Dorsolateral prefrontal cortex (tissue), 120 donors: ENCODE measurements at regions of chr3 and their contacts with region 1.

Region 1: DNA sequence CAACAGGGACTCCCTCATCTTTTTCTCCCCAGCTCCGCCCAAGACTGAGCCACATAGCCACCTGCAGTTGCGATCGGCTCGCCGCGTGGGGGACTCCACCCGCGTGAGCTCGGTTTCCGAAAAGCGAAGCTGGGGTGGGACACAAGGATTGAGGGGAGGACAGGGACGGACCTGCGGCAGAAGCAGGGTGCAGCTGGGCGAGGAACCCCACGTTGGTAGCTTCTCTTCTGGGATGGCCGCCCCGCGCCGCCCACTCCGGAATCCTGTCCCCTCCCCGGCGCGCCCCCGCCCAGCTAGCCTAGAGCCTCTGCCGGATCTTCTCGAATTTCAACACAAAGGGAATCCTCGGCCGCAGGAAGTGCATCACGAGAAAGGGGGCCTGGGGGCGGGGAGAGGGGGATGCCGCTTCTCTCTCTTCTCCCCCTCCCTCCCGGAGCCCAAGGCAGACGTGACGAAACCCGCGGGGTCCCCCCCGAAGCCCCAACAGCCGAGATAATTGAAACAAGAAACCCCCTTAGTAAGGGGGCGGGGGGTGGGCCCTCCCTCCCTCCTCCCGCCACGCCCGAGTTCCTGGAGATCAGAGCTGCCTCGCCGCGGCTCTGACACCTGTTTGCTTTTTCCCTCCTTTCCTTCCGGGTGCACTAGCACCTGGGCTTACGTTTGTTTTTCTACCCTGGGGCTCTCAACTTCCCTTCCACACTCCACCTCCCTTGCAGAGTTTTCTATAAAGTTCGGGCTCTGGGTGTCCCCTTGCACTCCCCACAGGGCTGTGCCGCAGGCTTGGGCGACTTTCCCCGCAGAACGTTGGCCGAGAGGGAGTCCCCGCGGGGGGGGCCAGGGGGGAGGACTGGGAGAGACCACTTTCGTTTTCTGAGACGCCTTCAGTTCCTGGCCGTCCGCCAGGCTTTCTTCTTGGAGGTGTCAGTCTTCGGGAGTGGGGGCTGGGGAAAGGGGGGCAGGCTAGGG is 1.3 kb upstream of the KCNH8 start:
- DNase-seq: peak; percentile 23 to 85 (median 76)
- H3K4me3 ChIP-seq: peak overlapping the region; percentile 53 to 91 (median 72)
- H3K27ac ChIP-seq: peak overlapping the region; percentile 12 to 98 (median 93)
- H3K27me3 ChIP-seq: peaks cover 0 to 41% (median 11%) of the 10 kb centered on the region in 45 donors
- CTCF ChIP-seq: peak in 55 of 56 donors; percentile 15 to 71 (median 52)

Region 2: DNA sequence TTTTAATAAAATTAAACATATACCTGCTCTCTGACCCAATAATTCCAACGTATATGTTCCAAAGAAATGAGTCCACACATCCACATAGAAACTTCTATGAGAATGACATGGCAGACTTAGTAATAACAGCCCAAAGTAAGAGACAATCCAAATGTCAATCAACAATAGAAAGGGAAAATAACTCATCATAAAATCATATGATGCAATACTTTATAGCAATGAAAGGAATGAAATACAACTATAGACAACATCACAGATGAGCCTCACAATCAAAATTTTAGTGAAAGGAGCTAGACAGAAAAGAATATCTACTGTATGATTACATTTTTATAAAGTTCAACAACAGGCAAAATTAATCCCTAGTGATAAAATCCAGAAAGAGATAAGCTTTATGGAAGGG is 22.2 kb before region 1 on chr3:
- intact Hi-C with region 1: no loop called
- DNase-seq: no peak
- H3K4me3 ChIP-seq: no peak overlapping the region
- H3K27ac ChIP-seq: no peak overlapping the region
- H3K27me3 ChIP-seq: no peaks in the 10 kb centered on the region
- CTCF ChIP-seq: no peak

Region 3: DNA sequence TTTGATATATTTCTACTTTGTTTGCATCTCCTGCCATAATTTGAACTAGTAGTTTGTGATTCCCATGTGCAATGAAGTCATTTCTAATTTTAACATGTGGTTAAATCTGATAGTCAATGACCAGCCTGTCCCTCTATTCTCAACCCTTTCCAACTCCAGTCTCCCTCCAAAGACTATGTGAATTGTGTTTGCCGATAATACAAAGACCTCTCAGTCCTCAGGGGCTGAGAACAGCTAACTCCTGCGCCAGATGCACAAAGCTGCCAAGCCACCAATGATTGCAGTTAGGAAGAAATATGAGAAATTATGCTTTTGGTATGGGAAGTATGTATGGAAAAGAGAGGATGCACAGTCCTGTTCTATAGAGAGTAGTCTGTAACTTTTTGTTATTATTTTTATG is 55.3 kb after region 1 on chr3:
- intact Hi-C with region 1: loop called (anchors 1 to 2 kb)
- DNase-seq: peak in 9 of 10 donors; percentile 32 to 72 (median 51)
- H3K4me3 ChIP-seq: peak overlapping the region in 42 of 59 donors; percentile 1 to 61 (median 30)
- H3K27ac ChIP-seq: peak overlapping the region; percentile 14 to 99 (median 92)
- H3K27me3 ChIP-seq: no peaks in the 10 kb centered on the region
- CTCF ChIP-seq: peak in 3 of 56 donors; percentile 11 to 25 (median 11)

Region 4: GRCh38 chr3:19272296-19272695 is 125.3 kb after region 1 on chr3:
- intact Hi-C with region 1: no loop called
- DNase-seq: no peak
- H3K4me3 ChIP-seq: no peak overlapping the region
- H3K27ac ChIP-seq: no peak overlapping the region
- H3K27me3 ChIP-seq: peaks cover 0 to 11% (median 0%) of the 10 kb centered on the region in 45 donors
- CTCF ChIP-seq: no peak

Region 5: DNA sequence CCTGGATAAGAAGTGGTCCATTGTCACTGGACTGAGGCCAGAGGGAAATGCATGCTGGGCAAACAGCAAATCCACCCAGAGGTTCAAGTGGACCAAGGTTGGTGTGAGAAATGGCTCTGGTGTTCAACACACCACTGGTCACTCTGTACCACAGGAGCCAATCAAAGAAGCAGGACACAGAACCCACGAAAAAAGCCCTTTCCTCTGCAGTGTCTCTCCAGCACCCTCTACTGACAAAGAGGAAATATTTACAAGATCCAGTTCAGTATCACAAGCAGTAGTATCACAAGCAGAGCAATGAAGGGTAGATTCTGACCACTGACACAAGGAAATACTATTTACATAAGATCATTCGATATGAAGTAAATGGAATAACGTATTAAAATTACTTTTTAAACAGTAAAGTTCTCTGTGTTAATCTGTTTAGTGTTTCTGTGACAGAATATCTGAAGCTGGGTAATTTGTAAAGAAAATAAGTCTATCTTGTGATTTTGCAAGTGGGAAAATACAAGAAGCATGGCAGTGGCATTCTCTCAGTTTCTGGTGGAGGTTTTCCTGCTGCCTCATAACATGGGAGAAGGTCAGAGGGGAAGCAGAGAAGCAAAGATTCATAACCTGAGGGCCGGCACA is 396.4 kb after region 1 on chr3:
- intact Hi-C with region 1: loop called in 1 of 2 experiments (anchors 5 kb)
- DNase-seq: no peak
- H3K4me3 ChIP-seq: no peak overlapping the region
- H3K27ac ChIP-seq: no peak overlapping the region
- H3K27me3 ChIP-seq: no peaks in the 10 kb centered on the region
- CTCF ChIP-seq: peak in 54 of 56 donors; percentile 31 to 81 (median 62)